Transverse colon (tissue), 4 donors: ENCODE measurements at regions of chr1 and their contacts with region 1.

Region 1: DNA sequence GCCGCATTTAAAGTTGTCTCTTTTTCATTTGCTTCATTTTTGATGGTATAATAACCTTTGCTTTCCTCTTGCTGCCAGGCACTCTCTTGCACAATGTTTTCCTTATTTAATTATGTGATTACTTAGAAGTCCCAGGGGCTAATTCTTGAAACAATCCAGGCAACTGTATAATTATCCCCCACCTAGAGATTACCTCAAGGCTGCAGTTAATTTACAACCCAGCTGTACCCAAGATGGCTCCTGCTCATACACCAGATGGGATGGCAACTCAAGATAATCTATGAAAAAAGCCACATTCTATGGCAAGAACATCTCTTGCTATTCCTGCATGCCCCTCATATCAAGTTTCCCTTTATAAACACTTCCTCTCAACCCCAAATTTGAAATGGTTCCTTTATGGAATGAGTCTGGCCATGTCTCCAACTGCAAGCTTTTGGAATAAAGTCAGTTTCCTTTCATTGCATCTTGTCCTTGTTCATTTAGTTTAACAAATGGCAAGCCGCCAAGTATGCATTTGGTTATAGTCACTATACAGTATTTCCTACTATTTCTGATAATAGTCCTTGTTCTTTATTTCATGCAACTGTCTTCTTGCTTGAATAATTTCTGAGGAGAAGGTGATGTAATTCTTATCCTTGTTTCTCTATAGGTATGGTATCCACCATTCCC is 1042.6 kb downstream of the PLA2G4A start:
- DNase-seq: no peak
- H3K4me3 ChIP-seq: no peak overlapping the region
- H3K27ac ChIP-seq: no peak overlapping the region
- H3K4me1 ChIP-seq: no peaks in the 10 kb centered on the region
- H3K27me3 ChIP-seq: no peaks in the 10 kb centered on the region
- CTCF ChIP-seq: no peak
- EP300 ChIP-seq: no peak
- POLR2A ChIP-seq: no peak

Region 2: GRCh38 chr1:186272486-186272885 is 1598.8 kb before region 1 on chr1:
- in situ Hi-C with region 1: no loop called
- intact Hi-C with region 1: loop called (anchors 5 kb)
- DNase-seq: no peak
- H3K4me3 ChIP-seq: no peak overlapping the region
- H3K27ac ChIP-seq: no peak overlapping the region
- H3K4me1 ChIP-seq: no peaks in the 10 kb centered on the region
- H3K27me3 ChIP-seq: no peaks in the 10 kb centered on the region
- CTCF ChIP-seq: no peak
- EP300 ChIP-seq: no peak
- POLR2A ChIP-seq: no peak

Region 3: GRCh38 chr1:186799689-186800054 is 1071.6 kb before region 1 on chr1:
- in situ Hi-C with region 1: no loop called
- intact Hi-C with region 1: no loop called
- DNase-seq: no peak
- H3K4me3 ChIP-seq: no peak overlapping the region
- H3K27ac ChIP-seq: no peak overlapping the region
- H3K4me1 ChIP-seq: no peaks in the 10 kb centered on the region
- H3K27me3 ChIP-seq: no peaks in the 10 kb centered on the region
- CTCF ChIP-seq: no peak
- EP300 ChIP-seq: no peak
- POLR2A ChIP-seq: no peak

Region 4: DNA sequence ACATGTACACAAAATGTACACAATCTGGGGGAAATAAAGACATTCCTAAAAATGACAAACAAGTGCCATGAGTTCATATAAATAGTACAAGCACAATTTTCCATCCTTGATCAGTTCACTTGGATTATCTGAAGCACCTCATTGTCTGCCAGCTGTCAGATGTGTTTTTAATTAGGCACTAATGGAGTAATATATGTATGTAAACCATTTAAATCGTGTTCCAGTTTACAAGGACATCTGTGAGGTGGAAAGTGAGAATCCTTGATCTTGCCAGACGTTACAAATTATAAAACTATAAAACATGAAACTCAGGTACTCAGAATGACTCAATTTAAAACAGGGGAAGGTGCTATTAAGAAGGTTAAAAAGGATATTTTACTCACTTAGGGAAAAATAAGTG is 269.6 kb after region 1 on chr1:
- in situ Hi-C with region 1: no loop called
- intact Hi-C with region 1: no loop called
- DNase-seq: no peak
- H3K4me3 ChIP-seq: no peak overlapping the region
- H3K27ac ChIP-seq: no peak overlapping the region
- H3K4me1 ChIP-seq: no peaks in the 10 kb centered on the region
- H3K27me3 ChIP-seq: no peaks in the 10 kb centered on the region
- CTCF ChIP-seq: no peak
- EP300 ChIP-seq: no peak
- POLR2A ChIP-seq: no peak